Spleen (tissue), 13 donors: ENCODE measurements at regions of chr12 and their contacts with region 1.

Region 1: GRCh38 chr12:10235761-10236631 is 23.3 kb downstream of the GABARAPL1 start:
- DNase-seq: no peak
- H3K4me3 ChIP-seq: no peak overlapping the region
- H3K27ac ChIP-seq: peak overlapping the region in 3 of 8 donors; percentile 30 to 74 (median 47)
- H3K4me1 ChIP-seq: peaks cover 0 to 13% (median 0%) of the 10 kb centered on the region in 6 donors
- H3K27me3 ChIP-seq: no peaks in the 10 kb centered on the region
- CTCF ChIP-seq: peak; percentile 67 to 92 (median 88)
- POLR2A ChIP-seq: no peak

Region 2: DNA sequence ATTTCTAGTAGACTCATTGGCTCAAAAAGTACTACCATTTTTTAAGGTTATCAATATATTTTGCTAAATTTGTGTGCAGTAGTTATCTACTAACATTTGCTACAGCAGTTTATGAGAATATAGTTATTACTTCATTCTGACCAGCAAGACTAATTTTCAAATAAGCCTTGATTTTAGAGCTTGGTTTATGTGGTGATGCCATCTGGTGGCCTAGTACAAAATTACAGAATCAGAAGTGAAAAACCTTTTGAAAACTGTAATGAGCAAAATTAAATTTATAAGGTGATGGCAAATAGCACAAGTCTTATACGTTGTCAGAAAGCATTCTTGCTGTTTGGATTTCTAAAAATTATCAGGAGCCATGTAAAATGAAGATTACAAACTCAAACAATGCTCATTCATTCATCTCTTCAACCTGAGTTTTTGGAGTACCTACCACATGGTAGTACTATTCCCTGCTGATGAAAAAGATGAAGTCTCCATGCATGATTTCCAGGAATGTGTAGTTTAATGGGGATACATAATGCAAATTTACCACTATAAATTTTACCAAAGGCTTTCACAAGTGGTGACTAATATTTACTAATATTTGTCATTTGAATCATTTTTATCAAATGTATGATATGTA is 326.4 kb after region 1 on chr12:
- intact Hi-C with region 1: loop called (anchors 5 kb)
- DNase-seq: no peak
- H3K4me3 ChIP-seq: no peak overlapping the region
- H3K27ac ChIP-seq: no peak overlapping the region
- H3K4me1 ChIP-seq: peaks cover 0 to 6% (median 0%) of the 10 kb centered on the region in 6 donors
- H3K27me3 ChIP-seq: no peaks in the 10 kb centered on the region
- CTCF ChIP-seq: peak; percentile 42 to 79 (median 70)
- POLR2A ChIP-seq: no peak

Region 3: DNA sequence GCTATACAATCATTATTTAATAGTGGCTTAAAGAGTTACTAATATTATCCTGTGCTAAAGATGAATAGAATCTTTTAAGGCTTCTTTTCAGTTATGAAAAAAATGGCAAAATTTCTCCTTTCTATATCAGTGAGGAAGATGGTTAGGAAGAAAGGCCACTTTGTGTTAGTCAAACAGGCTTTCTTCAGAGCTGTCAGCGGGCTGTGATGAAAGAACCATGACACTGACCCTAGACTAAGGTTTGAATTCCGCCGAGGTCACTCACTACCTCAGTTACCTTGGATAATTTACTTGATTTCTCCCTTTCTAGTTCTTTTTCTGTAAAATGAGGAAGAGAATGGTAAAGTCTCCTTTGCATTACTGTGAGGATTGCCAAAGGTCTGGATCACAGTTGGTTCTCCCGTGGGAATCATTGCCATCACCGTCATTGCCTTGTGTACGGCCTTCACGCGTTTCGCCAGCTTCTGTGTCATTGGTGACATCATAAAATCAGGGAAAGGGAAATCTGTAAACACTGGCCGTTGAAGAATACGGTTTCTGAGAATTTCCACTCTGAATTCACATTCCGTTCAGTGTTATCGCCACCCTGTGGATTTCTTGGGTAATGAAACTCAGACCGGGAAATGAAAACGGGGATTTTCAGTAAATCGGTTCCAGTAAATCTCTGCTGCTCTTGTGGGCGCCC is 513.8 kb after region 1 on chr12:
- intact Hi-C with region 1: loop called (anchors 5 kb)
- DNase-seq: no peak
- H3K4me3 ChIP-seq: peak overlapping the region in 2 of 8 donors; percentile 26 to 55
- H3K27ac ChIP-seq: peak overlapping the region in 6 of 8 donors; percentile 21 to 61 (median 53)
- H3K4me1 ChIP-seq: peaks cover 0 to 16% (median 10%) of the 10 kb centered on the region in 6 donors
- H3K27me3 ChIP-seq: peaks cover 0 to 7% (median 0%) of the 10 kb centered on the region in 7 donors
- CTCF ChIP-seq: peak; percentile 79 to 97 (median 89)
- POLR2A ChIP-seq: no peak